ENCODE measurements at regions of chr9 and their contacts with region 1.

Region 1: GRCh38 chr9:94166237-94166963 is 82.1 kb downstream of the PTPDC1 start:
- DNase-seq: peak; percentile 81 to 96 (median 92)
- ATAC-seq: peak; percentile 72
- H3K4me3 ChIP-seq: peak overlapping the region; percentile 82
- H3K4me3 Mint-ChIP-seq: peak overlapping the region; percentile 84 to 96 (median 88)
- H3K27ac ChIP-seq: peak overlapping the region; percentile 100
- H3K27ac Mint-ChIP-seq: peak overlapping the region; percentile 79 to 97 (median 91)
- H3K4me1 ChIP-seq: peaks cover 37 to 38% of the 10 kb centered on the region in 2 donors
- H3K4me1 Mint-ChIP-seq: peaks cover 33 to 61% (median 58%) of the 10 kb centered on the region in 7 donors
- H3K27me3 ChIP-seq: no peaks in the 10 kb centered on the region
- H3K27me3 Mint-ChIP-seq: no peaks in the 10 kb centered on the region

Region 2: GRCh38 chr9:92877531-92878430 is 1288.6 kb before region 1 on chr9 and contains the start of gene ZNF484:
- CTCF ChIA-PET with region 1: no interaction called
- POLR2A ChIA-PET with region 1: no interaction called
- intact Hi-C with region 1: loop called in 1 of 2 experiments (anchors 5 kb)
- DNase-seq: peak; percentile 86 to 97 (median 94)
- ATAC-seq: peak; percentile 99
- H3K4me3 ChIP-seq: peak within 1 kb of the TSS; percentile 77
- H3K4me3 Mint-ChIP-seq: peak within 1 kb of the TSS; percentile 91 to 100 (median 99)
- H3K27ac ChIP-seq: peak within 1 kb of the TSS; percentile 90
- H3K27ac Mint-ChIP-seq: peak within 1 kb of the TSS; percentile 94 to 100 (median 99)
- H3K4me1 ChIP-seq: peaks cover 0 to 15% of the 10 kb centered on the region in 2 donors
- H3K4me1 Mint-ChIP-seq: peaks cover 28 to 69% (median 58%) of the 10 kb centered on the region in 7 donors
- H3K27me3 ChIP-seq: no peaks in the 10 kb centered on the region
- H3K27me3 Mint-ChIP-seq: no peaks in the 10 kb centered on the region
- total RNA-seq, gene ZNF484: 12.4 to 25.4 (median 14.0) TPM

Region 3: GRCh38 chr9:94153905-94154304 is 12.5 kb before region 1 on chr9:
- CTCF ChIA-PET with region 1: interaction called, 4 read pairs
- POLR2A ChIA-PET with region 1: interaction called, 12 read pairs
- intact Hi-C with region 1: loop called in 1 of 2 experiments (anchors 1 kb)
- DNase-seq: peak in 5 of 9 donors; percentile 24 to 40 (median 27)
- ATAC-seq: peak; percentile 56
- H3K4me3 ChIP-seq: no peak overlapping the region
- H3K4me3 Mint-ChIP-seq: peak overlapping the region in 9 of 10 donors; percentile 6 to 66 (median 51)
- H3K27ac ChIP-seq: peak overlapping the region; percentile 36
- H3K27ac Mint-ChIP-seq: peak overlapping the region in 8 of 9 donors; percentile 52 to 92 (median 85)
- H3K4me1 ChIP-seq: peaks cover 0 to 15% of the 10 kb centered on the region in 2 donors
- H3K4me1 Mint-ChIP-seq: peaks cover 12 to 35% (median 23%) of the 10 kb centered on the region in 7 donors
- H3K27me3 ChIP-seq: no peaks in the 10 kb centered on the region
- H3K27me3 Mint-ChIP-seq: peaks cover 0 to 3% (median 0%) of the 10 kb centered on the region in 5 donors

Region 4: GRCh38 chr9:94213511-94214124 is 47.2 kb after region 1 on chr9:
- CTCF ChIA-PET with region 1: interaction called, 3 read pairs
- POLR2A ChIA-PET with region 1: no interaction called
- intact Hi-C with region 1: loop called (anchors 1 kb)
- DNase-seq: peak; percentile 39 to 76 (median 69)
- ATAC-seq: peak; percentile 97
- H3K4me3 ChIP-seq: no peak overlapping the region
- H3K4me3 Mint-ChIP-seq: peak overlapping the region in 6 of 10 donors; percentile 9 to 37 (median 14)
- H3K27ac ChIP-seq: no peak overlapping the region
- H3K27ac Mint-ChIP-seq: peak overlapping the region in 1 of 9 donors; percentile 76
- H3K4me1 ChIP-seq: no peaks in the 10 kb centered on the region
- H3K4me1 Mint-ChIP-seq: peaks cover 3 to 6% (median 4%) of the 10 kb centered on the region in 7 donors
- H3K27me3 ChIP-seq: no peaks in the 10 kb centered on the region
- H3K27me3 Mint-ChIP-seq: peaks cover 12 to 28% (median 21%) of the 10 kb centered on the region in 5 donors

Region 5: GRCh38 chr9:94443032-94443722 is 276.8 kb after region 1 on chr9:
- CTCF ChIA-PET with region 1: no interaction called
- POLR2A ChIA-PET with region 1: no interaction called
- intact Hi-C with region 1: no loop called
- DNase-seq: no peak
- ATAC-seq: no peak
- H3K4me3 ChIP-seq: no peak overlapping the region
- H3K4me3 Mint-ChIP-seq: no peak overlapping the region
- H3K27ac ChIP-seq: no peak overlapping the region
- H3K27ac Mint-ChIP-seq: no peak overlapping the region
- H3K4me1 ChIP-seq: no peaks in the 10 kb centered on the region
- H3K4me1 Mint-ChIP-seq: peaks cover 0 to 6% (median 0%) of the 10 kb centered on the region in 7 donors
- H3K27me3 ChIP-seq: no peaks in the 10 kb centered on the region
- H3K27me3 Mint-ChIP-seq: no peaks in the 10 kb centered on the region

Region 6: DNA sequence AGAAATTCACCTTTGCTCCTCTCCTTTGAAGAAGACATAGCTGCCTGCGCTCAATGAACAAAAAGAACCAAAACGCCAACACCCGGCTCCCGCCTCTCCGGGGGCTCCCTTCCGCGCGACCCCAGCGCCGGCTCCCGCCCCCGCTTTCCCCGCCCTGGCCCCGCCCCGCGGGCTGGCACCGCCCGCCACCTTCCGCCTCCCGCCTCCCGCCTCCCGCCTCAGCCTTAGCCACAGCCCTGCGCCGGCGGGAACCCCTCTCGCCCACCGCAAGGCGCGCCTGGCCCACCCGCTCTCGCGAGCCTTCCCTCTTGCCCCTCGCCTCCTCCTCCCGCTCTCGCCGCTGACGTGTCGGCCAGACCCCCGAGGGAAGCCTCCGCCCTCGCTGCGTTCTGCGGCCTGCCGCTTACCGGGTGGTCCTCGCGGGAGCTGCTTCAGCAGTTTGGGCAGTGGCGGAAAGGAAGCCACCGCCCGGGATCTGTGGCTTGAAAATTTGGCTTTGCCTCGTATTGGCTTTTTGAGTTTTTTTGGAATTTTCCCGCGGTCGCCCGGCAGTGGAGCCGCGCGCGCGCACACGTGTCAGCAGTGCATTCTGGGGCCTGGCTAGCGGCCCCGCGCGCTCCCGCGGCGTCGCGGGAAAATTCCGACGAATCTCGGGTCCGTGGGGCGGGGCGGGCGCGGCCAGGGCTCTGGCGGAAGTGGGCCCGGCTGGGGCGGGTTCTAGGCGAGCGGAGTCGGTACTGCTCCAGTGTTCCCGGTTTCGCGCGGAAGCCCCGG is 1150.9 kb after region 1 on chr9 and contains the start of gene FANCC:
- CTCF ChIA-PET with region 1: no interaction called
- POLR2A ChIA-PET with region 1: no interaction called
- intact Hi-C with region 1: loop called in 1 of 2 experiments (anchors 5 kb)
- DNase-seq: peak; percentile 74 to 89 (median 81)
- ATAC-seq: peak; percentile 94
- H3K4me3 ChIP-seq: peak within 1 kb of the TSS; percentile 85
- H3K4me3 Mint-ChIP-seq: peak within 1 kb of the TSS; percentile 78 to 95 (median 92)
- H3K27ac ChIP-seq: peak within 1 kb of the TSS; percentile 91
- H3K27ac Mint-ChIP-seq: peak within 1 kb of the TSS; percentile 75 to 95 (median 89)
- H3K4me1 ChIP-seq: peaks cover 3 to 7% of the 10 kb centered on the region in 2 donors
- H3K4me1 Mint-ChIP-seq: peaks cover 8 to 33% (median 23%) of the 10 kb centered on the region in 7 donors
- H3K27me3 ChIP-seq: no peaks in the 10 kb centered on the region
- H3K27me3 Mint-ChIP-seq: peaks cover 0 to 26% (median 0%) of the 10 kb centered on the region in 5 donors
- total RNA-seq, gene FANCC: 5.7 to 14.6 (median 7.9) TPM